ENCODE measurements at regions of chr9 and their contacts with region 1.

Region 1: DNA sequence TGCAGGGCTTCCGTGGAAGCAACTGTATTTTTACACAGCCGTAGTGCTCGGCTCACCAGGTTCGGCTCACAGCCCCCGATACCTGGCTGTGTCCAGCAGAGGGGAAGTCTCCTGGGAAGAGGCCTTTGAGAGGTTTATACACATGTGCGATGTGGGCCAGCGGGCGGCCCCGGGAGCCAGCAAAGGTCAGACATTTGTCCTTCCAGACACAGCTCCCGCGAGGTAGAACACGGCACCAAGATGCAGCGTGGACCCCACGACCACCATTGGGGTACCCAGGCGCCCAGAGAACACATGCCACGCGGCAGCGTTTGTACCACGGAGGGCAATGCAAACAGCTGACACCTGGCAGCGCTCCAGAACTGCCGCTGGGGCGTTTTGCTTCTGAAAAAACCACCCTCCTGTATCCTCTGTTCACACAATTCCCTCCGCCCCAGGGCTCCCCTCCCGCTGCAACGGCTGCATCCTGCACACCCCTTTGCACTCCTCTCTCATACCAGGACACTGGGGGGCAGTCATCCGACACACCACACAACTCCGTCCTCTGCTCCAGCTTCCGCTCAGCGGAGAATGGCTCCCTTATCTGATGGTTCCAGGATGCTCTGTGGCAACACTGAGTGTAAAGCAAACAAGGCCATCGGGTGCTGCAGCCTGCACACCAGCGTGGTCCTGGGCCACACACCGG is 235.3 kb downstream of the SYK start:
- DNase-seq: peak; percentile 93
- H3K4me3 Mint-ChIP-seq: peak overlapping the region; percentile 53
- H3K27ac Mint-ChIP-seq: peak overlapping the region; percentile 90
- H3K4me1 Mint-ChIP-seq: peaks cover 58% of the 10 kb centered on the region
- H3K27me3 Mint-ChIP-seq: peaks cover under 1% of the 10 kb centered on the region

Region 2: GRCh38 chr9:90838100-90838499 is 198.9 kb before region 1 on chr9:
- intact Hi-C with region 1: no loop called
- DNase-seq: no peak
- H3K4me3 Mint-ChIP-seq: no peak overlapping the region
- H3K27ac Mint-ChIP-seq: no peak overlapping the region
- H3K4me1 Mint-ChIP-seq: no peaks in the 10 kb centered on the region
- H3K27me3 Mint-ChIP-seq: peaks cover 2% of the 10 kb centered on the region

Region 3: GRCh38 chr9:90964101-90965020 is 72.6 kb before region 1 on chr9:
- intact Hi-C with region 1: loop called (anchors 5 kb)
- DNase-seq: no peak
- H3K4me3 Mint-ChIP-seq: peak overlapping the region; percentile 18
- H3K27ac Mint-ChIP-seq: peak overlapping the region; percentile 25
- H3K4me1 Mint-ChIP-seq: peaks cover 25% of the 10 kb centered on the region
- H3K27me3 Mint-ChIP-seq: peaks cover 2% of the 10 kb centered on the region

Region 4: GRCh38 chr9:91001146-91001611 is 35.8 kb before region 1 on chr9:
- intact Hi-C with region 1: no loop called
- DNase-seq: no peak
- H3K4me3 Mint-ChIP-seq: no peak overlapping the region
- H3K27ac Mint-ChIP-seq: no peak overlapping the region
- H3K4me1 Mint-ChIP-seq: peaks cover 9% of the 10 kb centered on the region
- H3K27me3 Mint-ChIP-seq: no peaks in the 10 kb centered on the region

Region 5: DNA sequence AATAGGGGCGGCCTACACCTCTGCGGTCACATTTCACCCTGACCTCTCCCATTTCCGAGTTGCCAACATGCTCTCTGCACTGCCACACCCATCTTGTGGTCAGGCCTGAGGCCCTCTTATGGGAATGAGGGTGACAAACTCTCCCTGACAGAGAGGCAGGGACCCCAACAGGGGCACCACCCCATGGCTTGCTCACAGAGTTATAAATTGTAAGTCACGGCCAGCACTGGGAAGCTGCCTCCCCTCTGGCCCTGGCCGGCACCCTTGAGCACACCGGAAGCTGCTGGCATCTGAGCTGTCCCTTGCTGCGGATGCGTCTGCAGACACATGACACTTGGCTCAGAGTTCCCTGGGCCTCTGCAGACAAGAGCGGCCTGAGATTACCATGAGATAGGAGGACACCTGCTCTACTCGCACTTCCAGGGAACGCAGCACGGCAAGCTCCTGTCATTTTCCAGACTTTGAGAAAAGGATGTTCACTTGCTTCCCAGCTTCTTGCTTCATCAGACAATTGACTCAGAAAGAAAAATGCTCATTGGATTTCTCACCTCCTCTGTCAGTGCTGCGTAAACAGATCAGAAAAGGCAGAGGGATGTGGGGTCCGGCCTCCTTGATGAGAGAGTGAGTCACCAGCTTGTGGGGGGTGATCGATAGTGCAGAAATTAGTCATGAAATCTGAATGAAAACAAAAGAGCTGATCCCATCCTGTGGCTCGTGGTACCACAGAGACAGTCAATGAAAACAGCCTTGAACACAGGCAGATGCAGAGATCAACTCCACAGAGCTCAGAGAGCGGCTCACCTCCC is 34.4 kb after region 1 on chr9:
- intact Hi-C with region 1: loop called (anchors 5 kb)
- DNase-seq: peak; percentile 84
- H3K4me3 Mint-ChIP-seq: peak overlapping the region; percentile 50
- H3K27ac Mint-ChIP-seq: peak overlapping the region; percentile 96
- H3K4me1 Mint-ChIP-seq: peaks cover 17% of the 10 kb centered on the region
- H3K27me3 Mint-ChIP-seq: no peaks in the 10 kb centered on the region

Region 6: DNA sequence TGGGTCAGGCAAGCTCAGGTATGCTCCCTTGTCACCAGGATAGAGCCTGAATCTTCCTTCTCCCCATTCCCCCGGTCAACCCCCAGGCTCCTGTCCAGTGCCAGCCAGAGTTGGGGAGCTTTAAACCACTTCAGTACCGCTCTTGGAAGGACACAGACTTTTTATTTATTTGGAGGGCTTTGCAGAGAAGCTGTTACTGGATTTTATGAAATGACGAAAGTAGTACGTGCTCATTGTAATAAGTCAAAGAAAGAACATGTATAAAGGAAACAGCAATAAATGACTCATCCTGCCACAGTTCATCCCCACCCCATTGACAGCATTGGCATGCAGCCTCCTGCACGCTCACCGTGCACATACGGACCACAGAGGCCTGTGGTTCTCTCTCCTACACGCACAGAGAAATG is 94.5 kb after region 1 on chr9:
- intact Hi-C with region 1: loop called (anchors 1 kb)
- DNase-seq: peak; percentile 93
- H3K4me3 Mint-ChIP-seq: peak overlapping the region; percentile 69
- H3K27ac Mint-ChIP-seq: peak overlapping the region; percentile 93
- H3K4me1 Mint-ChIP-seq: peaks cover 45% of the 10 kb centered on the region
- H3K27me3 Mint-ChIP-seq: no peaks in the 10 kb centered on the region

Region 7: DNA sequence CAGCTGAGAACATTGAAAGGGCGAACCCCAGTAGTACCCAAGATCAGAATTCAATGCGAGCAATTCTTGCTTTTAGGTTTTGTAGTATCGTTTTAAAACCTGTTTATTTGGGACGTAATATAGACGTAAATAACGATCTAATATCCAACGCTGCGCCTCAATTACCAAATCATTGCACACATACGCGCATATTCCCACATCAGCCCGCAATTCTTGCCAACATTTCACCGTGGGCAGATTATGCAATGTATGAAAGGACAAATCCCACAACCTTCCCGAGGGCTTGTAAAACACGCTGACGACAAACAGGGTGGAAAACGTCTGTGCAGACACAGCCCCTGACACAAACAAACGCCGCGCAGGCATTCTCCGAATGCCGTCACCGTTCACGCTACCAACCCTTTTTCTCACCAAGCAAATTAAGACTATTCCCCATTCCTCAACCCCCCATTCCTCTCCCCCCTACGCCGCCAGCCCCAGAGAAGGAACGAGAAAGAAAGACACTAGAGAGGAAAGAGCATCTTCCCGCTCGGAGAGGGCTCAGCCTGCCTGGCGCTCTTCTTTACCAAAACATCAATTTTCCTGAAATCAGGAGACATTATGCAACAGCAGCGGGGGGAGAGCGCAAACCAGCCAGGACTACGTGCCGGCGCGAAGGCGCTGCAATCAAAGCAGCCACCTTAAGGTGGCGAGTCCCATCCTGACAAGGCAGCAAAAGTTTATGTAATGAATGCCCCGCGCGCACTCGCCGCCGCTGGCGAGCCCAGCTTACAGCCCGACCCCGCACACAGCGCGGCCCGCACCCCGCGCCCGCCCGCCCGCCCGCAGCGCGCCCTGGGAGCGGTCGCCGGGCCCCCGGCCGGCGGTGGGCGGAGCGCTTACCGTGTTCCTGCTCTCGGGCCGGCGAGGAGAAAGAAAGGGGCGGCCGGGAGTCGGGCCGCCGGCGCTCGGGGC is 386.1 kb after region 1 on chr9:
- intact Hi-C with region 1: loop called (anchors 1 kb)
- DNase-seq: peak; percentile 89
- H3K4me3 Mint-ChIP-seq: peak overlapping the region; percentile 100
- H3K27ac Mint-ChIP-seq: peak overlapping the region; percentile 98
- H3K4me1 Mint-ChIP-seq: peaks cover 57% of the 10 kb centered on the region
- H3K27me3 Mint-ChIP-seq: no peaks in the 10 kb centered on the region

Measured in activated CD4-positive, alpha-beta T cell treated with anti-CD3 and anti-CD28 coated beads, Interleukin-2, amount 10 ng/mL, durations not matched to agents 24 days and 14 days (primary cell).